ENCODE measurements at regions of chr19 and their contacts with region 1.

Region 1: DNA sequence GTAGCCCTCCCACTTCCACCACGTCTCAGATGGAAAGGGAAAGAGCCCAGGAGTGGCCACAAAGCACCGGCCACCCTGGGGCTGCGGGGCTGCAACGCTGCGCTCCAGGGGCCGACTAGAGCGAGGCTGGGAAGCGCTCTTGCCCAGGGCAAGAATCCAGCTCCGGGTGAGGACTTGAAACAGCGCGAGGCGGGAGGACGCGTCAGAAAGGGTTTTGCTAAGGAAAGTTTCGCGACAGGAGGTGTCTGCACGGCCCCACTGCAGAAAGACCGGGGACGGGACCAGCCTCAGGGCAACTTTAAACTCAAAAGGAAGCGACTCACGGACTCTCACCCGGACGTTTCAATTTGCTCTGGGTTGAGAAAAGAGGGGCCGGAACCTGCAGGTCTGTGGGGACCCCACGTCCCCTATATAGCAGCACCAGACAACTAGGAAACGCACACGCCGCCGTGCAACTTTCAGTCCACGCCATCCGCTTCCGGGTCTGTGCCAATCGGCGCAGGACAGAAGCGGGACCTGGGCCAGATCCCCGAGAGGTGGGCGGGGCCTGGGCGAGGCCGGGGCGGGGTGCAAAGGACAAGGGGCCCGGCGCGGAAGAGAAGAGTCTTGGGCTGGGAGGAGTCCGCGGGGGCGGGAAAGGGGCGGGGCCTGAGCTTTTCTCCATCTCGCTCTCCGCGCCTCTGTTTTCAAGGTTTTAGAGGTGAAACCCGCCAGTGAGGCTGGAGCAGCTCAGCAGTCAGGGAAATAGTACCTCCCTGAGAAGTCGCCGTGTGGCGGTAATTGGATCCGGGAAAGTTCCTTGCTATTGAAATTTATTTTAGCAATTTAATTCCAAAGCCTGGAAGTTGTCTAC is at the start of gene ZNF816:
- DNase-seq: peak; percentile 91 to 93 (median 92)
- H3K4me3 ChIP-seq: peak within 1 kb of the TSS; percentile 62 to 82 (median 72)
- H3K4me3 Mint-ChIP-seq: peak within 1 kb of the TSS; percentile 98 to 99
- H3K27ac ChIP-seq: peak within 1 kb of the TSS; percentile 54 to 85
- H3K27ac Mint-ChIP-seq: peak within 1 kb of the TSS; percentile 83 to 93 (median 90)
- H3K4me1 ChIP-seq: peaks cover 14 to 17% of the 10 kb centered on the region in 2 donors
- H3K4me1 Mint-ChIP-seq: peaks cover 22% of the 10 kb centered on the region
- H3K27me3 ChIP-seq: no peaks in the 10 kb centered on the region
- H3K27me3 Mint-ChIP-seq: no peaks in the 10 kb centered on the region
- CTCF ChIP-seq: no peak
- polyA plus RNA-seq, gene ZNF816: 1.4 to 4.3 (median 2.0) TPM

Region 2: GRCh38 chr19:52734893-52735661 is 227.5 kb before region 1 on chr19 and contains the start of gene ZNF611:
- intact Hi-C with region 1: loop called in 1 of 2 experiments (anchors 10 kb)
- DNase-seq: peak; percentile 91 to 94 (median 93)
- H3K4me3 ChIP-seq: peak within 1 kb of the TSS; percentile 83 to 97 (median 94)
- H3K4me3 Mint-ChIP-seq: peak within 1 kb of the TSS; percentile 85 to 94
- H3K27ac ChIP-seq: peak within 1 kb of the TSS; percentile 80 to 93
- H3K27ac Mint-ChIP-seq: peak within 1 kb of the TSS; percentile 88 to 97 (median 94)
- H3K4me1 ChIP-seq: peaks cover 11 to 19% of the 10 kb centered on the region in 2 donors
- H3K4me1 Mint-ChIP-seq: peaks cover 21% of the 10 kb centered on the region
- H3K27me3 ChIP-seq: no peaks in the 10 kb centered on the region
- H3K27me3 Mint-ChIP-seq: peaks cover 0 to 3% (median 0%) of the 10 kb centered on the region in 3 donors
- CTCF ChIP-seq: peak; percentile 77
- polyA plus RNA-seq, gene ZNF611: 5.5 to 20.2 (median 12.0) TPM

Region 3: DNA sequence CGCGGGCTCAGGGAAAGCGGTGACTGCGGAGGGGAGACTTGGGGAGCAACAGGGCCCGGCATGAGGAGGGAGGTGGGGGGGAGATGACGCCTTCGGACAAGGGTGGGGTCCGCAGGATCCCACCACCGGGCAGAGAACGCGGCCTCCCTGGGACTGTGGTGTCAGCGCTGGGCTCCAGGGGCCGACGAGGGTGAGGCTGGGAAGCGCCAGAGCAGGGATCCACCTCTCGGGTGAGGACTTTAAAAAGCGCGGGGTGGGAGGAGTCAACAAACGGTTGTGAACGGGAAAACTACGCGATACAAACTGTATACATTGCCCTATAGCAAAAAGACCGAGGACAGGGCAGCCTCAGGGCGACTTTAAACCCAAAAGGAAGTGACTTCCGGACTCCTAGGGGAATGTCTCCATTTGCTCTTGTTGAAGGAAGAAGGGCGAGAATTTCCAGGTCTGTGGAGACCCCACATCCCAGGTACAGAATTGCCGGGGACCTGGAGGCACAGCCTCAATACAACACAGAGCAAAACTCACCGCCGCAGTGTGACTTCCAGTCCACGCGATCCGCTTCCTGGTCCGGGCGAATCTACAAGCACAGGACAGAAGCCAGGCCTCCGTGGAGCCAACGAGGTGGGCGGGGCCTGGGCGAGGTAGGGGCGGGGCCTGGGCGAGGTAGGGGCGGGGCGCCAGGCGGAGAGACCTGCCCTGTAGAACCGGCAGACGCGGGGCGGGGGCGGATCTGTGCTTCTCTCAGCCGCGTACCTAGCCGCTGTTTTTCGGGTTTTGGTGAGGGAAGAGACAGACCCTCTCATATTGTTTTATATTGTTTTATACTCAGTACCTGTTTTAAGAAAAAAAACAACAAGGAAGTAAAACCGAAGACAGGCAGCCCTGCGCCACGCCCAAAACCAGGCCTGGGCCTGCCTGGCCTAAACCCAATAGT is 39.5 kb before region 1 on chr19 and contains the start of gene ZNF888:
- intact Hi-C with region 1: loop called (anchors 2 to 5 kb)
- DNase-seq: peak; percentile 82 to 85 (median 83)
- H3K4me3 ChIP-seq: peak within 1 kb of the TSS; percentile 62 to 89 (median 87)
- H3K4me3 Mint-ChIP-seq: peak within 1 kb of the TSS; percentile 93 to 96
- H3K27ac ChIP-seq: peak within 1 kb of the TSS; percentile 83 to 87
- H3K27ac Mint-ChIP-seq: peak within 1 kb of the TSS; percentile 93 to 98 (median 95)
- H3K4me1 ChIP-seq: peaks cover 24 to 29% of the 10 kb centered on the region in 2 donors
- H3K4me1 Mint-ChIP-seq: peaks cover 34% of the 10 kb centered on the region
- H3K27me3 ChIP-seq: no peaks in the 10 kb centered on the region
- H3K27me3 Mint-ChIP-seq: peaks cover 0 to 1% (median 0%) of the 10 kb centered on the region in 3 donors
- CTCF ChIP-seq: no peak
- polyA plus RNA-seq, gene ZNF888: 0.71 to 1.7 (median 1.4) TPM

Region 4: DNA sequence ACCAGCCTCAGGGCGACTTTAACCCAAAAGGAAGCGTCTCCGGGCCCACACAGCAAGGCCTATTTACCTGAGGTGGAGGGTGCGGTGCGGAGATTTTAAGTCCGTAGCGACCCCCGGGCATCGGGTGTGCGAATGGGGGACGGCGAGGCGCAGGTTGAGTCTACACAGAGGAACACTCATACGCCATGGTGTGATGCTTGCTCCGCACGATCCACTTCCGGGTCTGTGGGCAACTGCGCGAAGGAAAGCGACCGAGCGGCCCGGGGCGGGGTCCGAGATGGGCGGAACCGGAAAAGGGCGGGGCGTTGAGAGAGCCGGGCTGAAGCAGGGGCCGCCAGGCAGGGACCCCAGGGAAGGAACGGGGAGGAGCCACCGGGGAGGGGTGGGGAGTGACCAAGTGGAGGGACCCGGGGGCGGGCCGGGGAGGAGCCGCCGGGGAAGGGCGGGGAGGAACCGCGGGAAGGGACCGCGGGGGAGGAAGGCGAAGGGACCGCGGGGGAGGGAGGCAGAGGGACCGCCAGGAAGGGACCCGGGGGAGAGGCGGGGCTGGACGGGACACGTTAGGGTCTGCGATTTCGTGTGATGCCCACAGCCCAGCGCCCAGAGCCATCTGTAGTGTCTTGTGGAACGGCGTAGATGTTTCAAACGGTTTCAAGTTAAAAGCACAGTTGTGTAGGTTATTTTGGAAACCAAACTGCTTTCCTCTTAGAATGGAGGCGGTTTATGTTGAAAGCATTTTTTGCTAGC is 140.8 kb after region 1 on chr19 and contains the start of gene ZNF160:
- intact Hi-C with region 1: loop called in 1 of 2 experiments (anchors 10 kb)
- DNase-seq: peak; percentile 92 to 97 (median 92)
- H3K4me3 ChIP-seq: peak within 1 kb of the TSS; percentile 57 to 95 (median 93)
- H3K4me3 Mint-ChIP-seq: peak within 1 kb of the TSS; percentile 90 to 92
- H3K27ac ChIP-seq: peak within 1 kb of the TSS; percentile 89 to 93
- H3K27ac Mint-ChIP-seq: peak within 1 kb of the TSS; percentile 86 to 96 (median 93)
- H3K4me1 ChIP-seq: peaks cover 19 to 24% of the 10 kb centered on the region in 2 donors
- H3K4me1 Mint-ChIP-seq: peaks cover 17% of the 10 kb centered on the region
- H3K27me3 ChIP-seq: no peaks in the 10 kb centered on the region
- H3K27me3 Mint-ChIP-seq: peaks cover 2 to 9% (median 4%) of the 10 kb centered on the region in 3 donors
- CTCF ChIP-seq: no peak
- polyA plus RNA-seq, gene ZNF160: 6.4 to 24.5 (median 7.7) TPM